Transverse colon (tissue), 4 donors: ENCODE measurements at regions of chr4 and their contacts with region 1.

Region 1: GRCh38 chr4:128454281-128455075 is 166.9 kb upstream of the PGRMC2 start:
- DNase-seq: peak; percentile 73
- H3K4me3 ChIP-seq: no peak overlapping the region
- H3K27ac ChIP-seq: no peak overlapping the region
- H3K4me1 ChIP-seq: peaks cover 0 to 10% (median 0%) of the 10 kb centered on the region in 4 donors
- H3K27me3 ChIP-seq: no peaks in the 10 kb centered on the region
- CTCF ChIP-seq: peak; percentile 66 to 72 (median 69)
- EP300 ChIP-seq: no peak
- POLR2A ChIP-seq: no peak

Region 2: GRCh38 chr4:128386761-128387599 is 67.5 kb before region 1 on chr4:
- in situ Hi-C with region 1: no loop called
- intact Hi-C with region 1: loop called (anchors 1 kb)
- DNase-seq: peak; percentile 79
- H3K4me3 ChIP-seq: no peak overlapping the region
- H3K27ac ChIP-seq: peak overlapping the region; percentile 73 to 85 (median 79)
- H3K4me1 ChIP-seq: peaks cover 2 to 38% (median 18%) of the 10 kb centered on the region in 4 donors
- H3K27me3 ChIP-seq: no peaks in the 10 kb centered on the region
- CTCF ChIP-seq: no peak
- EP300 ChIP-seq: peak; percentile 2
- POLR2A ChIP-seq: no peak

Region 3: GRCh38 chr4:128517739-128518510 is 63.4 kb after region 1 on chr4:
- in situ Hi-C with region 1: no loop called
- intact Hi-C with region 1: no loop called
- DNase-seq: peak; percentile 14
- H3K4me3 ChIP-seq: no peak overlapping the region
- H3K27ac ChIP-seq: peak overlapping the region in 3 of 4 donors; percentile 28 to 51 (median 38)
- H3K4me1 ChIP-seq: peaks cover 0 to 10% (median 6%) of the 10 kb centered on the region in 4 donors
- H3K27me3 ChIP-seq: no peaks in the 10 kb centered on the region
- CTCF ChIP-seq: no peak
- EP300 ChIP-seq: no peak
- POLR2A ChIP-seq: no peak